Calu3 (cell line): ENCODE measurements at regions of chr7 and their contacts with region 1.

Region 1: DNA sequence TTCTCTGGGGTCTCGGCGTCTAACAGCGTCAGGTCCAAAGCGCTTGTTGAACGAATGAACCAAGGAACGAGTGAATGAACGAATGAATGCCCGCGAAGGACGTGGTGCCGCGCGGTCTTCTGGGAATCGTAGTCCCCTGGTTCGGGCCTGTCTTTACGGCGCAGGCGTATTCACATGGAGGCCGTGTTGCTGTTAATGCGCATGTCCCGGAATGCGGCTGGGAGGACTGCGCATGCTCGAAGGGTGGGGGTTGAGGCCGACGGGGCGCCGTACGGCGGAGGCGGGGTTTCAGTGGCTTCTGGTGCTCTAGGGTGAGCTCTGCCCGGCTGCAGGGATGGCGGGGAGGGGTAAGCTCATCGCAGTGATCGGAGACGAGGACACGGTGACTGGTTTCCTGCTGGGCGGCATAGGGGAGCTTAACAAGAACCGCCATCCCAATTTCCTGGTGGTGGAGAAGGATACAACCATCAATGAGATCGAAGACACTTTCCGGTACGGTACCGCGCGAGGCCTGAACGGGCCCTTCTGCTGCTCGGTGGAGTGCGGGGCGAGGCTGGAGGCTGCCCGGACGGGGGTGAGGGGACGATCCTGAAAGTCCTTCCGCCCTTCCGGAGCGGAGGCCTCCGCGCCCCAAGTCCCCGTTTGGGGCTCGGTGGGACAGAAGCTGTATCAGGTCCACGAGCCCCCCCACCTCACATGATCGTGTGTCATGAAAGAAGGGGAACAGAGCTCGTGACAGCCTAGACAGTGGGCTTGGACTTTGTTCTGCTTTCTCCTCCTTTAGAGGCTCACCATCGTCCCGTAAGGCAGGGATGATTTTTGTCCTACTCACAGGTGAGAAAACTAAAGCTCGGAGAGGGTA is at the start of gene ATP6V1F:
- DNase-seq: peak; percentile 98
- H3K4me3 Mint-ChIP-seq: peak within 1 kb of the TSS; percentile 90
- H3K27ac Mint-ChIP-seq: peak within 1 kb of the TSS; percentile 82
- H3K4me1 Mint-ChIP-seq: peaks cover 10% of the 10 kb centered on the region
- H3K27me3 Mint-ChIP-seq: peaks cover 8% of the 10 kb centered on the region
- CTCF ChIP-seq: no peak
- total RNA-seq, gene ATP6V1F: 104 and 123 TPM in 2 replicates

Region 2: GRCh38 chr7:128247676-128248194 is 615.1 kb before region 1 on chr7:
- CTCF ChIA-PET with region 1: no interaction called
- intact Hi-C with region 1: no loop called
- DNase-seq: peak; percentile 46
- H3K4me3 Mint-ChIP-seq: no peak overlapping the region
- H3K27ac Mint-ChIP-seq: no peak overlapping the region
- H3K4me1 Mint-ChIP-seq: no peaks in the 10 kb centered on the region
- H3K27me3 Mint-ChIP-seq: peaks cover 55% of the 10 kb centered on the region
- CTCF ChIP-seq: no peak

Region 3: DNA sequence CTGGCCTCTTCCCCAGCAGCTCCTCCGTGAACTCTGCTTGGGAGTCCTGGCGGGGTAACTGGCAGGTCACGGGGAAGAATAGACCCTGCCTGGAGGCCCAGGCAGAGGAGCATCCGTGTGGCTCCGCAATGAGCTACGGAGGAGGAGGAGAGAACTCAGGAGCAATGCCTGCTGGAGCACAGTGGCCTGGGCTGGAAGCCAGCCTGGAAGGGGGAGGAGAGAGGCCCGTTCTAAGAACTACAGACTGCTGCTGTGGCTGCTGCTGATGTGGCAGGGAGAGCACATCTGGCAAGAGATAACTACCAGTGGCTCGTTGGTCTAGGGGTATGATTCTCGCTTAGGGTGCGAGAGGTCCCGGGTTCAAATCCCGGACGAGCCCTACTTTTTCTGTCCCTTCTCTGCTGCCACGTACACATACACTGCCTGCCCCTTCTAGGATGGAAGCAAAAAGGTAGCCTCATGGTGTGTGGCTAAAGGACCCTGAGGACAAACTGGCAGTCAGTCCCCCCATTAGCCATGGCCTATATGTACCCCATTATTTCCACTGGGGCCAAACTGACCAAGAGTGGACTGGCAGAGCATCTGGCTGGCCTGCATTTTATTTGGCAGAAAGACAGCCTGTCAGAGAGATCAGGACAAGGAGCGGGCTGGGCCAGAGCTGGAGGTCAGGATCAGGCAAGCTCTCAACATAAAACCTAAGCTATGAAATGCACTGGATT is 79.5 kb before region 1 on chr7:
- CTCF ChIA-PET with region 1: no interaction called
- intact Hi-C with region 1: loop called (anchors 10 kb)
- DNase-seq: no peak
- H3K4me3 Mint-ChIP-seq: no peak overlapping the region
- H3K27ac Mint-ChIP-seq: no peak overlapping the region
- H3K4me1 Mint-ChIP-seq: no peaks in the 10 kb centered on the region
- H3K27me3 Mint-ChIP-seq: peaks cover 72% of the 10 kb centered on the region
- CTCF ChIP-seq: no peak

Region 4: GRCh38 chr7:129091484-129092002 is 228.7 kb after region 1 on chr7:
- CTCF ChIA-PET with region 1: interaction called, 9 read pairs
- intact Hi-C with region 1: loop called (anchors 2 kb)
- DNase-seq: peak; percentile 91
- H3K4me3 Mint-ChIP-seq: no peak overlapping the region
- H3K27ac Mint-ChIP-seq: no peak overlapping the region
- H3K4me1 Mint-ChIP-seq: no peaks in the 10 kb centered on the region
- H3K27me3 Mint-ChIP-seq: peaks cover 12% of the 10 kb centered on the region
- CTCF ChIP-seq: peak; percentile 92